ENCODE measurements at regions of chr16 and their contacts with region 1.

Region 1: DNA sequence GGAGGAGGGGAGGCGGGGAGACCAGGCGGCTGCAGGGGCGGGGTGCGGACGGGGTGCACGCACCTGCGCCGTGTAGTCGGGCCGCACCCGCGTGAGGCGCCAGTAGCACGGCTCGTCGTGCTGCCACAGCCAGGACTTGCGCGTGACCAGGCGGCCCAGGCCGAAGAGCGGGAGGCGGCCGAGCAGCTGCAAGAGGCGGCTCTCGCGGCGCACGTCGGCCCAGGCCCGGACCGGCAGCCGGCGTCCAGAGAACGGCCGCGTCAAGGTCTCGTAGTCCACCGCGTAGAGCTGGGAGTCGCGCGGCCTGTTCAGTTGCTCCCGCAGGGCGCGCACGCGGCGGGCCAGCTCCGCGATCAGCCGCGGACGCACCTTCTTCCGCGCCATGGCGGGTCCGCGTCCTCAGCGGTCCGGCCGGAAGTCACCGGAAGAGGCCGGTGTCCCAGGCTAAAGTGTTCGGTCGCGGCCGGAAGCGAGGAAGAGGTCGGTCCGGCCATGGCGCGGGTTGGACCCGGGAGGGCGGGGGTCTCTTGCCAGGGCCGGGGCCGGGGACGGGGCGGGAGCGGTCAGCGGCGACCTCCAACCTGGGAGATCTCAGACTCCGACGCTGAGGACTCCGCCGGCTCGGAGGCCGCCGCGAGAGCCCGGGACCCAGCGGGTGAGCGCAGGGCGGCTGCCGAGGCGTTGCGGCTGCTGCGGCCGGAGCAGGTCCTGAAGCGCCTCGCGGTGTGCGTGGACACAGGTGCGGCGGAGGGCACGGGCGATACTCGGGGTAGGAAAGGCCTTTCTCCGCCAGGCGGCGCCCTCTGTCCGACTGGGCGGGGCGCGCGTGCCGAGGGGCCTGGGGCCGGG is at the starts of genes EME2 and MRPS34:
- DNase-seq: peak; percentile 51 to 95
- H3K4me3 ChIP-seq: peak within 1 kb of the TSS; percentile 82 to 91 (median 82)
- H3K27ac ChIP-seq: peak within 1 kb of the TSS; percentile 62
- H3K4me1 ChIP-seq: peaks cover 0 to 12% (median 10%) of the 10 kb centered on the region in 4 experiments; a peak in 5 of 7 replicates
- H3K27me3 ChIP-seq: no peaks in the 10 kb centered on the region
- CTCF ChIP-seq: peak in 2 of 3 experiments; percentile 70 to 80; a peak in 3 of 4 replicates
- EP300 ChIP-seq: no peak
- POLR2A ChIP-seq: peak in 1 of 2 experiments; percentile 44; a peak in 1 of 3 replicates
- RAD21 ChIP-seq: peak; percentile 27 to 50; a peak in 3 of 4 replicates
- total RNA-seq, gene EME2: 19.3 and 19.7 TPM in 2 replicates
- total RNA-seq, gene MRPS34: 252 and 267 TPM in 2 replicates

Region 2: GRCh38 chr16:1757714-1758404 is 15.1 kb before region 1 on chr16:
- CTCF ChIA-PET with region 1: interaction called, 4 read pairs
- POLR2A ChIA-PET with region 1: interaction called, 246 read pairs
- DNase-seq: no peak
- H3K4me3 ChIP-seq: no peak overlapping the region
- H3K27ac ChIP-seq: no peak overlapping the region
- H3K4me1 ChIP-seq: no peaks in the 10 kb centered on the region; a peak in 2 of 7 replicates
- H3K27me3 ChIP-seq: no peaks in the 10 kb centered on the region
- CTCF ChIP-seq: no peak
- EP300 ChIP-seq: no peak
- POLR2A ChIP-seq: no peak
- RAD21 ChIP-seq: no peak

Region 3: DNA sequence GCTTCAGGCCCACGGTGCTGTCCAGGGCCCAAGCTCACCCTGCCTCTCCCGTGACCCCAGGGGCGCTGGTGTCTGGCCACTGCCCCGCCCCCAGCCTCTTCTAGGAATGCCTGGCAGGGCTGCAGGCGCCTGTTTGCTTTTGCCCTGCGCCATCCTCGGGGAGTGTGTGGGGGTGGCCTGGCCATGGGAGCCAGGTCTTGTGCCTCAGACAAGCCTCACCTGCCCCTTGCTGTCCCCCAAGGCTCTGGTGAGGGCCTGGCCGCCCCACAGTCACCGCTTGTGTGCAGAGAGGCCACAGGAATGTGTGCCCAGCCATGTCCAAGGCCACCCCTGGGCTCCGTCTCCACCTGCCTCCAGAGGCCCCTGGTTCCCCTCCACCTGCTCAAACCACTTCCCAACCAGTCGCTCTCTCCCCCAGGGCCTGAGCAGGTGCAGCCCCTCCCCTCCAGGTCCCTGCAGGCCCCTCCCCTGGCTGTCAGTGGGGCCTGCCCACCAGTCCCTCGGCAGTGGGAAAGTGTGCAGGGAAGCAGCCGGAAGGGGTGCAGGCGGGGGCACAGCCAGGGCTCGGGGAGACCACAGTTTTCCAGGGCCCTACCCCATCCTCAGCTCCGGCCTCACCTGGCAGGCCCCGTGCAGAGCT is 21.4 kb after region 1 on chr16:
- CTCF ChIA-PET with region 1: interaction called, 6 read pairs
- POLR2A ChIA-PET with region 1: interaction called, 26 read pairs
- DNase-seq: no peak
- H3K4me3 ChIP-seq: no peak overlapping the region
- H3K27ac ChIP-seq: no peak overlapping the region
- H3K4me1 ChIP-seq: no peaks in the 10 kb centered on the region
- H3K27me3 ChIP-seq: no peaks in the 10 kb centered on the region
- CTCF ChIP-seq: no peak
- EP300 ChIP-seq: no peak
- POLR2A ChIP-seq: no peak
- RAD21 ChIP-seq: no peak

Measured in H1 (cell line).